CD14-positive monocyte (primary cell): ENCODE measurements at regions of chr15 and their contacts with region 1.

Region 1: DNA sequence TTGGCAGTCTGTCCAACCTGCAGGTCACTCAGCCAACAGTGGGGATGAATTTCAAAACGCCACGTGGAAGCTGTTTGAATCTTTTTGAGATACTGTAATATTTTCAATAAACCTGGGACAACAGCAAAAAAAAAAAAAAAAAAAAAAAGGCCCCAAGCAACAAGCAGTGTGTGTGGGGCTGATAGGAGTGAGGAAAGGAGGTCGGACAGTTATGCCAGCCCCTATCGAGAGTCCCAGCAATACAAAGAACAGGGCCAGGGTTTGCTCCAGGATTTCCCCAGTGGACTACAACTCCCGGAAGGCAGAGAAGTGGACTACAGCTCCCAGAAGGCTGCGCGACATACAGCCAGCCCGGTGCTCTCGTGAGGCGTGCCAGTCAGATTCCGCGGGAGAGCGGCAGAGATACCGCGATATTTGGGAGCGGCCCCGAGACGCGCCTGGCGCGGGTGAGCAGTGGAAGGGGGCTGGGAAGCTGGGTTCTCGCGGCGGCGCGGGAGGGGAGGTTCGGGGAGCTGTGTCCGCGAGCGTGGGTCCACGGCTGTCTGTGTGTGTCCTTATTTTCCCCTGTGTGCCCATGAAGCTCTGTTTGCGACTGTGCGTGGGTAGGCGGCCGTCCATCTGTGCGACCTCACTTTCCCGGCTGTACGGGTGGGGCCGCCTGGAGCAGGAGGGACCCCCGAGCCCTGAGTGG is at the start of gene PPCDC:
- DNase-seq: peak; percentile 89 to 94 (median 93)
- H3K4me3 ChIP-seq: peak within 1 kb of the TSS; percentile 77 to 93 (median 78)
- H3K4me3 Mint-ChIP-seq: peak within 1 kb of the TSS; percentile 87 to 91
- H3K27ac ChIP-seq: peak within 1 kb of the TSS; percentile 62 to 88
- H3K27ac Mint-ChIP-seq: peak within 1 kb of the TSS; percentile 83 to 94 (median 89)
- H3K4me1 ChIP-seq: peaks cover 30 to 38% of the 10 kb centered on the region in 2 donors
- H3K4me1 Mint-ChIP-seq: peaks cover 34% of the 10 kb centered on the region
- H3K27me3 ChIP-seq: no peaks in the 10 kb centered on the region
- H3K27me3 Mint-ChIP-seq: no peaks in the 10 kb centered on the region
- CTCF ChIP-seq: no peak
- polyA plus RNA-seq, gene PPCDC: 14.2 to 33.7 (median 18.7) TPM

Region 2: GRCh38 chr15:74956648-74957300 is 66.6 kb before region 1 on chr15 and contains the start of gene RPP25:
- intact Hi-C with region 1: loop called in 1 of 2 experiments (anchors 5 kb)
- DNase-seq: peak; percentile 32 to 62 (median 51)
- H3K4me3 ChIP-seq: peak within 1 kb of the TSS; percentile 33 to 83 (median 50)
- H3K4me3 Mint-ChIP-seq: peak within 1 kb of the TSS; percentile 77 to 86
- H3K27ac ChIP-seq: no peak within 1 kb of the TSS
- H3K27ac Mint-ChIP-seq: peak within 1 kb of the TSS in 2 of 7 donors; percentile 35 to 66
- H3K4me1 ChIP-seq: peaks cover 40 to 50% of the 10 kb centered on the region in 2 donors
- H3K4me1 Mint-ChIP-seq: peaks cover 42% of the 10 kb centered on the region
- H3K27me3 ChIP-seq: peaks cover 41 to 54% of the 10 kb centered on the region in 2 donors
- H3K27me3 Mint-ChIP-seq: peaks cover 53 to 64% (median 64%) of the 10 kb centered on the region in 3 donors
- CTCF ChIP-seq: no peak
- polyA plus RNA-seq, gene RPP25: 1.7 to 6.7 (median 6.5) TPM

Region 3: GRCh38 chr15:75090388-75090734 is 67.0 kb after region 1 on chr15:
- intact Hi-C with region 1: no loop called
- DNase-seq: peak; percentile 76 to 97 (median 90)
- H3K4me3 ChIP-seq: peak overlapping the region in 2 of 3 experiments; percentile 20 to 53
- H3K4me3 Mint-ChIP-seq: peak overlapping the region; percentile 62 to 84
- H3K27ac ChIP-seq: peak overlapping the region in 1 of 2 donors; percentile 65
- H3K27ac Mint-ChIP-seq: peak overlapping the region; percentile 79 to 91 (median 83)
- H3K4me1 ChIP-seq: peaks cover 15 to 16% of the 10 kb centered on the region in 2 donors
- H3K4me1 Mint-ChIP-seq: peaks cover 17% of the 10 kb centered on the region
- H3K27me3 ChIP-seq: no peaks in the 10 kb centered on the region
- H3K27me3 Mint-ChIP-seq: peaks cover 0 to 6% (median 0%) of the 10 kb centered on the region in 3 donors
- CTCF ChIP-seq: no peak